Natural killer cell (primary cell): ENCODE measurements at regions of chr18 and their contacts with region 1.

Region 1: DNA sequence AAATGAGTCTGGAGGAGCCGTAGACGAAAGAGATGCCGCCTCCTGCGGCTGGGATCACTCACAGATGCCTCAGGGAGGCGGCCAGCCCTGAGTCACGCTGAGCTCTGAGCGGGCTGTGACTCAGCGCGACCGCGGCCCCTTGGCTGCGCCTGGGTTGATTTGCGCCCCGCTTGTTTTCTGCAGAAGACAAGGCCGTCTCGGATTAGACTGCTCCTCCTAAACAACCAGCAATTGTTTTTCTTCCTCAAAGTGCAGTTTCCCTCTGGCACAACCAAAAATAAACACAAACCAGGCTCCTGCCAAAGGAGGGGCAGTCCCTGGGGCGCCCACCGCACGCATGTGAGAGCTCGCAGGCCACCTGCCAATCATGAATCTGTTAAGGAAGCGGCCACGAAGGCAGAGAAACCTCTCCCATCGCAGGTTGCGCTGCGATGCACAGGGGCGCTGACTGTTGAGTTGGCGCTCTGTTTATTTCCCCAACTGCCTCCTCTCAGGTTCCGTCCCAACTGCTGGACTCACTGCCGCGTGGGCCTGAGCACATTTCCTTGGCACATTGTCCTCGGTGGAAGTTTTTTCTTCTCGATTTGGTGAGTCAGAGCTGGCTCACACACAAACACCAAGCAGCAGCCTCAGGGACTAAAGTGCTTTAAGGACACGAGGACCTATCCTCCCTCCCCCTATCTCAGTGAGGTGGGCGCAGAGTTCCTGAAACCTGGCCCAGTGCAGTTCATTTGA is 85.2 kb upstream of the NDUFV2 start:
- DNase-seq: peak; percentile 19 to 35
- ATAC-seq: peak; percentile 62 to 88 (median 87)
- H3K4me3 ChIP-seq: no peak overlapping the region
- H3K4me3 Mint-ChIP-seq: peak overlapping the region; percentile 55
- H3K27ac ChIP-seq: no peak overlapping the region
- H3K27ac Mint-ChIP-seq: no peak overlapping the region
- H3K4me1 ChIP-seq: peaks cover 12% of the 10 kb centered on the region
- H3K4me1 Mint-ChIP-seq: peaks cover 0 to 6% of the 10 kb centered on the region in 2 donors
- H3K27me3 ChIP-seq: no peaks in the 10 kb centered on the region
- H3K27me3 Mint-ChIP-seq: no peaks in the 10 kb centered on the region
- CTCF ChIP-seq: no peak

Region 2: GRCh38 chr18:8951491-8951890 is 65.8 kb before region 1 on chr18:
- intact Hi-C with region 1: loop called (anchors 10 kb)
- DNase-seq: peak in 1 of 2 donors; percentile 7
- ATAC-seq: no peak
- H3K4me3 ChIP-seq: no peak overlapping the region
- H3K4me3 Mint-ChIP-seq: no peak overlapping the region
- H3K27ac ChIP-seq: no peak overlapping the region
- H3K27ac Mint-ChIP-seq: no peak overlapping the region
- H3K4me1 ChIP-seq: peaks cover 6% of the 10 kb centered on the region
- H3K4me1 Mint-ChIP-seq: peaks cover 0 to 4% of the 10 kb centered on the region in 2 donors
- H3K27me3 ChIP-seq: no peaks in the 10 kb centered on the region
- H3K27me3 Mint-ChIP-seq: peaks cover 6 to 14% of the 10 kb centered on the region in 2 donors
- CTCF ChIP-seq: no peak